Keratinocyte (primary cell): ENCODE measurements at regions of chr3 and their contacts with region 1.

Region 1: GRCh38 chr3:63809607-63810006 is 9.5 kb upstream of the C3orf49 start:
- DNase-seq: no peak
- H3K4me3 ChIP-seq: no peak overlapping the region
- H3K27ac ChIP-seq: no peak overlapping the region
- H3K4me1 ChIP-seq: peaks cover 7% of the 10 kb centered on the region
- H3K27me3 ChIP-seq: no peaks in the 10 kb centered on the region
- CTCF ChIP-seq: no peak

Region 2: DNA sequence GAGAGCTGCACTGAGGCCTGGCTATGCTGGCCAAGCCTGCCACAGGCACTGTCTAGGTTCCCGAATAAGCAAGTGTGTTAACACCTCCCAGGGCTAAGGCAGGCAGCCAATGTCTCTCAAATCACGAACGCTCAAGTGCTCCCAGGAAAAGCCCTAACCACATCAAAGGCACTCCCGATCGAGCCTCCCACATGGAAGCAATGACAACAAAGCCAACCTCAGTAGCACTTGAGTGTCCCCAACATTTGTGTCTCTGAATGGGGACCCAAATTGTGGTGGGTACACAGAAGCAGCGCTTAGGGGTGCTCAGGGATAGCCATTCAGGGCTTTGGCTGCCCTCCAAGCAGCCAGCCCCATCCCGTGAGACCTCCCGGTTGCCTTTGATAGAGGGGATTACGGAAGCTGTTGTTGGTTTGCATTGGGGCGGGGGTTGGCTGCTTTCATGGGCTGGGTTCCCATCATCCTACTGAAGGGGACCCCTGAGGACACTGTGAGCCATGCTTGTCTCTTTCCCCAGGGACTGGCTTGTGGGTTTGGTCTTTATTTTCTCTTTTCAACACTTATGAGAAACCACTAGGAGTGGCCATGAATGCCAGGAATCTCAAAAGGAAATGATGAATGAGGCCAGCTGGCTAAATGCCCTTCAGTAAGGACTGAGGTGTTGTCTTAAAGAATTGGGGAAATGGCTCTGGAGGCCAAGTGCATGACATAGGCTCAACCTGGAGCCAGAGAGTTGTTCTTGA is 1202.1 kb before region 1 on chr3:
- dilution Hi-C with region 1: no loop called
- DNase-seq: no peak
- H3K4me3 ChIP-seq: no peak overlapping the region
- H3K27ac ChIP-seq: peak overlapping the region; percentile 52
- H3K4me1 ChIP-seq: peaks cover 41% of the 10 kb centered on the region
- H3K27me3 ChIP-seq: no peaks in the 10 kb centered on the region
- CTCF ChIP-seq: no peak

Region 3: DNA sequence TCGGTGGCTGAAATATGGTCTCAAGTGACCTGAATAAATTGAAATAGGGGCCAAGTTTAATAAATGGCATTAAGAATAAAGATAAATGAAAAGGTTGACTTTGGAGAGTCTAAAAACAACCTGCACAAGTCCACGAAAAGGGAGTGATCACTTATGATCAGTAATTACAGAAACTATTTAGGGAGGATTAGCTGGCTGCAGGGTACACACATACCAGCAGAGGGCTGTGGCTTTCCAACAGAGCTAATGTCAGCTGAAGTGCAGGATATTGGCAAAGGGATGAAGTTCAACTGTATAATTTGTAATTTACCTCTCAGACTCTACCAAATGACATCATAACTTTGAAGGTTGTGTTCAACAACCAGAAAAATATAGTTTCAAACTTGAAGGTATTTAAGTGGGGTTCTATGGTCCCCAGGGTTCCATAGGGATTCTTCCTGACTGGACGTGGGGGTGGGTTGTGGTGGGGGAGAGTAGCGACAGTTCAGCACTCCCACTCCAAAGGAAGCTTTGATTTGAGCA is 444.6 kb before region 1 on chr3:
- dilution Hi-C with region 1: loop called (anchors 10 kb)
- DNase-seq: no peak
- H3K4me3 ChIP-seq: no peak overlapping the region
- H3K27ac ChIP-seq: no peak overlapping the region
- H3K4me1 ChIP-seq: no peaks in the 10 kb centered on the region
- H3K27me3 ChIP-seq: no peaks in the 10 kb centered on the region
- CTCF ChIP-seq: peak; percentile 15 to 44 (median 18)